ENCODE measurements at regions of chr20 and their contacts with region 1.

Region 1: DNA sequence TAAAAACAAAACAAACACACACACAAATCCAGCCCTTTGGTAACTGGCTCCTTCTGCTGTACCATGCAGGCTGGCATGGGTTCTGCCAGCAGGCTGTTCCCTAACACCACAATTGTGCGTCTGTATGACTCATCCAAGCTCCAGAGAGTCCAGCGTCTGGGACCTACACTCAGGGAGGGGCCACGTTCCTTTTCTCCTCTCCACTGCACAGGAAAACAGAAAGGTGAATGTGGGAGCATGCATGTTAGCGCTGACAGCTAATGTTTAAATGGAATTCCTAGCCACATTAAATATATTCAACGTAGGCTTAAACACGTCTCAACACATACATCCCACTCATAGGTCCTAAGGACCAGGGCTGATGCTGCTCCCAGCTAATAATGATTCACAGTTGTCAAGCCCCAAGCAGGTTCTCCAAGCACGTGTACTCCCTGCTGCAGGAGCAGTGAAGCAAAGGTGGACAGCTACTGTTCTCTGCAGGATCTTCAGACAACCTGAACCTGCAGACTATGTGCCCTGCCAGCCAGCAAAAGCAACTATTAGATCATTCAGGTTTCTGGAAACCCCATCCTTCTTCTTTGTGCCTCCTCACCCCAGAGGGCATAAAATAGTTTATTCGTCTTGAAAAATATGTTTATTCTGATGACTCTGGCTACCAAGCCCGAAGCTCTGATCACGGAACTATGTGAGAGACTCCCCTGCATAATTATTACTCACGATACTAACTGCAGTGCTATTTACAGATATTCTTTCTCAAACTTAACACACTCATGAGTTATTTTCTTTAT is 20.9 kb downstream of the MAP1LC3A start:
- DNase-seq: peak in 1 of 2 experiments; percentile 59
- H3K4me3 ChIP-seq: no peak overlapping the region
- H3K4me3 Mint-ChIP-seq: no peak overlapping the region
- H3K27ac Mint-ChIP-seq: no peak overlapping the region
- H3K4me1 ChIP-seq: peaks cover 20% of the 10 kb centered on the region
- H3K4me1 Mint-ChIP-seq: peaks cover 9% of the 10 kb centered on the region
- H3K27me3 ChIP-seq: no peaks in the 10 kb centered on the region
- H3K27me3 Mint-ChIP-seq: no peaks in the 10 kb centered on the region
- CTCF ChIP-seq: peak in 1 of 2 experiments; percentile 82

Region 2: GRCh38 chr20:33009214-33010132 is 1569.9 kb before region 1 on chr20:
- CTCF ChIA-PET with region 1: no interaction called
- POLR2A ChIA-PET with region 1: no interaction called
- intact Hi-C with region 1: no loop called
- DNase-seq: peak in 1 of 2 experiments; percentile 39
- H3K4me3 ChIP-seq: no peak overlapping the region
- H3K4me3 Mint-ChIP-seq: no peak overlapping the region
- H3K27ac Mint-ChIP-seq: no peak overlapping the region
- H3K4me1 ChIP-seq: no peaks in the 10 kb centered on the region
- H3K4me1 Mint-ChIP-seq: no peaks in the 10 kb centered on the region
- H3K27me3 ChIP-seq: peaks cover 3% of the 10 kb centered on the region
- H3K27me3 Mint-ChIP-seq: peaks cover 18% of the 10 kb centered on the region
- CTCF ChIP-seq: no peak

Region 3: GRCh38 chr20:34293589-34293988 is 285.8 kb before region 1 on chr20:
- CTCF ChIA-PET with region 1: no interaction called
- POLR2A ChIA-PET with region 1: interaction called, 10 read pairs
- intact Hi-C with region 1: no loop called
- DNase-seq: no peak
- H3K4me3 ChIP-seq: no peak overlapping the region
- H3K4me3 Mint-ChIP-seq: no peak overlapping the region
- H3K27ac Mint-ChIP-seq: peak overlapping the region; percentile 14
- H3K4me1 ChIP-seq: no peaks in the 10 kb centered on the region
- H3K4me1 Mint-ChIP-seq: no peaks in the 10 kb centered on the region
- H3K27me3 ChIP-seq: no peaks in the 10 kb centered on the region
- H3K27me3 Mint-ChIP-seq: no peaks in the 10 kb centered on the region
- CTCF ChIP-seq: no peak

Region 4: GRCh38 chr20:34532406-34532719 is 47.0 kb before region 1 on chr20:
- CTCF ChIA-PET with region 1: interaction called, 11 read pairs
- POLR2A ChIA-PET with region 1: no interaction called
- intact Hi-C with region 1: no loop called
- DNase-seq: peak in 1 of 2 experiments; percentile 36
- H3K4me3 ChIP-seq: no peak overlapping the region
- H3K4me3 Mint-ChIP-seq: no peak overlapping the region
- H3K27ac Mint-ChIP-seq: no peak overlapping the region
- H3K4me1 ChIP-seq: no peaks in the 10 kb centered on the region
- H3K4me1 Mint-ChIP-seq: peaks cover 7% of the 10 kb centered on the region
- H3K27me3 ChIP-seq: no peaks in the 10 kb centered on the region
- H3K27me3 Mint-ChIP-seq: no peaks in the 10 kb centered on the region
- CTCF ChIP-seq: no peak

Region 5: GRCh38 chr20:34815636-34816035 is 236.3 kb after region 1 on chr20:
- CTCF ChIA-PET with region 1: no interaction called
- POLR2A ChIA-PET with region 1: no interaction called
- intact Hi-C with region 1: no loop called
- DNase-seq: no peak
- H3K4me3 ChIP-seq: no peak overlapping the region
- H3K4me3 Mint-ChIP-seq: no peak overlapping the region
- H3K27ac Mint-ChIP-seq: no peak overlapping the region
- H3K4me1 ChIP-seq: no peaks in the 10 kb centered on the region
- H3K4me1 Mint-ChIP-seq: peaks cover 6% of the 10 kb centered on the region
- H3K27me3 ChIP-seq: no peaks in the 10 kb centered on the region
- H3K27me3 Mint-ChIP-seq: no peaks in the 10 kb centered on the region
- CTCF ChIP-seq: no peak